Natural killer cell (primary cell): ENCODE measurements at regions of chr12 and their contacts with region 1.

Region 1: DNA sequence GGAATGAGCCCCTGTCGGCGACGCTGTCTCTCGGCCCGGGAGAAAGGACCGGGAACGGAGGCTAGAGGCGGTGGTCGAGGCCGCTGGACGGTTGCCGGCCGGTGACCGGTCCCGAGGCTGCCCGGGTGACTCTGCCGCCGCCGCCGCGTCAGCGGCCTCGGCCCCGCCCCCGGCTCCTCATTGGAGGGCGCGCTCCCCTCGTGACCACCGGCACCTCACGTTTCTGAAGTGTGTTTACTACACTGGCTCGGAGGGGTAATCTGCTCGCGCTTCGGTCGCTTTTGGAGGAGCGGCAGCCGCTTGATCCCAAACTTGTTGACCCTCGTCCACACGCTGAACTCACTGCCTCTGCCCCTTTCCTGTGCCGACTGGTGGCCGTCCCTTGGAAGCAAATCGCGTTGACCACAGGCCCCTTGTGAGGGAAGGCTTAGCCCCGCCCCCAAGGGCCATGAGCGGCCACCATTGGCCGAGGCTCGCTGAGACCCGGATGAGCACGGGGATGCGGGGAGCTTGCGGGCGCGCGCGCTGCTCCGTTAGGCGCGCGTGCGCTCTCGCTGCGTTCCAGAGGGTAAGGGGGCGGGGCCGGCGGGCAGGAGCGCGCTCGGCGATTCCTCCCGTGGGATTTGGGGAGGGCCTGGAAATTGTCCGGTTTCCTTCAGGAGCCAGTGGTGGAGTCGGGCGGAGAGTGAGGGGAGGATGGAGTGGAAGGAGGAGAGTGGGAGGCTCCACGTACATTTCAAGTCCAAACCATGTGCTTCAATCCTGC is at the start of gene CRY1:
- DNase-seq: peak; percentile 96 to 97
- ATAC-seq: peak; percentile 76 to 95 (median 85)
- H3K4me3 ChIP-seq: peak within 1 kb of the TSS; percentile 93
- H3K4me3 Mint-ChIP-seq: no peak within 1 kb of the TSS
- H3K27ac ChIP-seq: peak within 1 kb of the TSS; percentile 98
- H3K27ac Mint-ChIP-seq: no peak within 1 kb of the TSS
- H3K4me1 ChIP-seq: peaks cover 19% of the 10 kb centered on the region
- H3K4me1 Mint-ChIP-seq: peaks cover 17 to 19% of the 10 kb centered on the region in 2 donors
- H3K27me3 ChIP-seq: no peaks in the 10 kb centered on the region
- H3K27me3 Mint-ChIP-seq: peaks cover 6% of the 10 kb centered on the region in 2 donors
- CTCF ChIP-seq: no peak
- total RNA-seq, gene CRY1: 71.1 to 124 (median 115) TPM

Region 2: GRCh38 chr12:106955377-106956047 is 138.1 kb before region 1 on chr12 and contains the start of gene TMEM263:
- intact Hi-C with region 1: loop called (anchors 1 kb)
- DNase-seq: peak; percentile 90 to 97
- ATAC-seq: peak; percentile 81 to 94 (median 86)
- H3K4me3 ChIP-seq: peak within 1 kb of the TSS; percentile 88
- H3K4me3 Mint-ChIP-seq: peak within 1 kb of the TSS; percentile 98
- H3K27ac ChIP-seq: peak within 1 kb of the TSS; percentile 92
- H3K27ac Mint-ChIP-seq: peak within 1 kb of the TSS; percentile 89 to 98
- H3K4me1 ChIP-seq: peaks cover 18% of the 10 kb centered on the region
- H3K4me1 Mint-ChIP-seq: peaks cover 27 to 31% of the 10 kb centered on the region in 2 donors
- H3K27me3 ChIP-seq: no peaks in the 10 kb centered on the region
- H3K27me3 Mint-ChIP-seq: no peaks in the 10 kb centered on the region
- CTCF ChIP-seq: no peak
- total RNA-seq, gene TMEM263: 24.1 to 37.5 (median 34.4) TPM

Region 3: GRCh38 chr12:106986625-106987430 is 106.8 kb before region 1 on chr12 and contains the start of gene MTERF2:
- intact Hi-C with region 1: loop called (anchors 10 kb)
- DNase-seq: peak; percentile 69 to 90
- ATAC-seq: peak; percentile 95 to 96 (median 95)
- H3K4me3 ChIP-seq: peak within 1 kb of the TSS; percentile 92
- H3K4me3 Mint-ChIP-seq: peak within 1 kb of the TSS; percentile 96
- H3K27ac ChIP-seq: peak within 1 kb of the TSS; percentile 75
- H3K27ac Mint-ChIP-seq: peak within 1 kb of the TSS; percentile 92 to 97
- H3K4me1 ChIP-seq: peaks cover 10% of the 10 kb centered on the region
- H3K4me1 Mint-ChIP-seq: peaks cover 24 to 50% of the 10 kb centered on the region in 2 donors
- H3K27me3 ChIP-seq: no peaks in the 10 kb centered on the region
- H3K27me3 Mint-ChIP-seq: no peaks in the 10 kb centered on the region
- CTCF ChIP-seq: no peak
- total RNA-seq, gene MTERF2: 12.5 to 24.0 (median 15.1) TPM

Region 4: GRCh38 chr12:107014028-107014427 is 79.6 kb before region 1 on chr12:
- intact Hi-C with region 1: loop called (anchors 5 kb)
- DNase-seq: peak in 1 of 2 donors; percentile 61
- ATAC-seq: peak; percentile 75 to 82 (median 79)
- H3K4me3 ChIP-seq: no peak overlapping the region
- H3K4me3 Mint-ChIP-seq: no peak overlapping the region
- H3K27ac ChIP-seq: no peak overlapping the region
- H3K27ac Mint-ChIP-seq: no peak overlapping the region
- H3K4me1 ChIP-seq: no peaks in the 10 kb centered on the region
- H3K4me1 Mint-ChIP-seq: no peaks in the 10 kb centered on the region
- H3K27me3 ChIP-seq: no peaks in the 10 kb centered on the region
- H3K27me3 Mint-ChIP-seq: no peaks in the 10 kb centered on the region
- CTCF ChIP-seq: no peak

Region 5: DNA sequence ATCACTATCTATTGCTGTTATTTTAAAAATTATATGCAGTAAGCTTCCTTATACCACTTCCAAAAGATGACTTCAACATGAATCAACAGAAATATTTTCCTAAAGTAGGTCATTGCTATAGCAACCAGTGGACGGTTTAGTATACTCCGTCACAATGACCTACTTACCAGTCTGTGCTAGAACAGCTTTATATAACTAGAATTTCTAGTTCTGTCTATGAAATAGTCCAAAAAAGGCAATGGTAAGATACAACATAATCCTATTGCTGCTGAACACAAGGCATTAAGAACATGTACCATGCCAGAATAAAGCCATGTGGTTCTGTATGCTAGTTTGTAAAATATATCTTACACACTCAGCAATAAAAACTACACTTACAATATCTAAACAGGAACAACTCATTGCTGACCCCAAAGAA is 66.0 kb before region 1 on chr12:
- intact Hi-C with region 1: loop called (anchors 1 kb)
- DNase-seq: peak in 1 of 2 donors; percentile 86
- ATAC-seq: peak; percentile 78 to 91 (median 89)
- H3K4me3 ChIP-seq: peak overlapping the region; percentile 10
- H3K4me3 Mint-ChIP-seq: peak overlapping the region; percentile 90
- H3K27ac ChIP-seq: peak overlapping the region; percentile 97
- H3K27ac Mint-ChIP-seq: peak overlapping the region; percentile 96 to 100
- H3K4me1 ChIP-seq: peaks cover 3% of the 10 kb centered on the region
- H3K4me1 Mint-ChIP-seq: peaks cover 50 to 78% of the 10 kb centered on the region in 2 donors
- H3K27me3 ChIP-seq: no peaks in the 10 kb centered on the region
- H3K27me3 Mint-ChIP-seq: no peaks in the 10 kb centered on the region
- CTCF ChIP-seq: no peak